Endothelial cell of umbilical vein (primary cell): ENCODE measurements at regions of chr19 and their contacts with region 1.

Region 1: GRCh38 chr19:55599468-55600279 is at the start of gene FIZ1:
- DNase-seq: peak; percentile 99
- H3K4me3 ChIP-seq: peak within 1 kb of the TSS; percentile 78 to 92 (median 89)
- H3K27ac ChIP-seq: peak within 1 kb of the TSS; percentile 98
- H3K4me1 ChIP-seq: peaks cover 12% of the 10 kb centered on the region
- H3K27me3 ChIP-seq: no peaks in the 10 kb centered on the region
- CTCF ChIP-seq: no peak
- POLR2A ChIP-seq: no peak
- total RNA-seq, gene FIZ1: 14.7 and 15.6 TPM in 2 replicates

Region 2: DNA sequence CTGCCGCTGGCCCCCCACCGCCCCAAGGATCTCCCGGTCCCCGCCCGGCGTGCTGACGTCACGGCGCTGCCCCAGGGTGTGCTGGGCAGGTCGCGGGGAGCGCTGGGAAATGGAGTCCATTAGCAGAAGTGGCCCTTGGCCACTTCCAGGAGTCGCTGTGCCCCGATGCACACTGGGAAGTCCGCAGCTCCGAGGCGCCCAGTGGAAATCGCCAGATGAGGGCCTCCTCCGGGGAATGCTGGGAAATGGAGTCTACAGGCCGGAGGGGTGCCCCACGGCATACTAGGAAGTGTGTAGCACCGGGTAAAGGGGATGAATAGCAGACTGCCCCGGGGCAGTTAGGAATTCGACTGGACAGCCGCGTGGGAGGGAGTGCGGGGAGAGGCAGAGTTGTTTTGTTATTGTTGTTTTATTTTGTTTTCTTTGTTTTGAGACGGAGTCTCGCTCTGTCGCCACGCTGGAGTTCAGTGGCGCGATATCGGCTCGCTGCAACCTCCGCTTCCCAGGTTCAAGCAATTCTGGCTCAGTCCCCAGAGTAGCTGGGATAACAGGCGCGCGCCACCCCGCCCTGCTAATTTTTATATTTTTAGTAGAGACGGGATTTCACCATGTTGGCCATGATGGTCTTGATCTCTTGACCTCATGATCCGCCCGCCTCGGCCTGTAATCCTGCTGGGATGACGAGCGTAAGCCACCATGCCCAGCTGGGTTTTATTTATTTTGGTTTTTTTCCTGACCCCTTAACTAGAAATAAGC is 481.9 kb before region 1 on chr19 and contains the start of gene PPP1R12C:
- CTCF ChIA-PET with region 1: no interaction called
- POLR2A ChIA-PET with region 1: no interaction called
- dilution Hi-C with region 1: no loop called
- intact Hi-C with region 1: loop called (anchors 1 kb)
- DNase-seq: peak; percentile 98
- H3K4me3 ChIP-seq: peak within 1 kb of the TSS; percentile 30 to 92 (median 75)
- H3K27ac ChIP-seq: peak within 1 kb of the TSS; percentile 59
- H3K4me1 ChIP-seq: peaks cover 20% of the 10 kb centered on the region
- H3K27me3 ChIP-seq: no peaks in the 10 kb centered on the region
- CTCF ChIP-seq: no peak
- POLR2A ChIP-seq: peak; percentile 79
- total RNA-seq, gene PPP1R12C: 137 and 149 TPM in 2 replicates

Region 3: GRCh38 chr19:55385740-55386529 is 213.7 kb before region 1 on chr19 and contains the start of gene RPL28:
- CTCF ChIA-PET with region 1: no interaction called
- POLR2A ChIA-PET with region 1: no interaction called
- dilution Hi-C with region 1: no loop called
- intact Hi-C with region 1: loop called (anchors 10 kb)
- DNase-seq: peak; percentile 99
- H3K4me3 ChIP-seq: peak within 1 kb of the TSS; percentile 33 to 69 (median 67)
- H3K27ac ChIP-seq: peak within 1 kb of the TSS; percentile 75
- H3K4me1 ChIP-seq: peaks cover 31% of the 10 kb centered on the region
- H3K27me3 ChIP-seq: no peaks in the 10 kb centered on the region
- CTCF ChIP-seq: no peak
- POLR2A ChIP-seq: peak; percentile 100
- total RNA-seq, gene RPL28: 1,738 and 1,872 TPM in 2 replicates

Region 4: GRCh38 chr19:55549500-55550320 is 50.0 kb before region 1 on chr19:
- CTCF ChIA-PET with region 1: interaction called, 4 read pairs
- POLR2A ChIA-PET with region 1: no interaction called
- dilution Hi-C with region 1: no loop called
- intact Hi-C with region 1: loop called (anchors 1 kb)
- DNase-seq: peak; percentile 86
- H3K4me3 ChIP-seq: peak overlapping the region in 2 of 3 experiments; percentile 21 to 26
- H3K27ac ChIP-seq: peak overlapping the region; percentile 96
- H3K4me1 ChIP-seq: peaks cover 33% of the 10 kb centered on the region
- H3K27me3 ChIP-seq: peaks cover 0 to 3% of the 10 kb centered on the region in 2 experiments
- CTCF ChIP-seq: peak in 1 of 2 donors; percentile 13
- POLR2A ChIP-seq: no peak

Region 5: DNA sequence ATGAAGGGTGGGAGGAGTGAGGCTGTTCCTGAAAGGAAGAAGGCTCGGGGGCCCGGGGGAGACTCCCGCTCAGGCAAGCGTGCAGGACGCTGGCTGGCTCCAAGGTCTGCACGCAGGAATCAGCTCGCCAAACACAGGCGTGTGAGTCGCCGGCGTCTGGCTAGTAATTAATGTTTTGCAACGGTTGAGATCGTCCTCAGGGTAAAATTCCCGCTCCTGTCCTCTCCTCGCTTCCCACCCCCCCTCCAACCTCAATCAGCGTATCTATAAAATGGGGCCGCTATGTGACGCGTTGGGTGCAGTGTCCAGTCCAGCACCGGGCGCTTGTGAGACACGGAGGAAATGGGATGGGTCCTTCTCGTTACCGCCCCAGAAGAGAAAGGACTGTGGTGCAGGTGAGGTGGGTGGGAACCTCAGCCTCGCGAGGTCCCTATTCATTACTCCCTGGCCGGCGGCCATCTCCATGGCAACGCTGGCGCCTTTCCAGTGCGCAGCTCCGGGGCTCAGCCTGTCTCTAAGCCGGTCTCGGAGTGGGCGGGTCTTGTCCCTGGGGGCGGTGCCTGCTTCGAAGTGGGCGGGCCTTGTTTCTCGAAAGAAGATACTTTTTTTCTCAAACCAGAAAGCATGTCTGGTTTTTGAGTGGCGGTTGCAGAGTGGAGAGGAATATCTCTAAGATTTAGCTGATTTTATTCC is 12.6 kb before region 1 on chr19:
- CTCF ChIA-PET with region 1: interaction called, 3 read pairs
- POLR2A ChIA-PET with region 1: interaction called, 8 read pairs
- dilution Hi-C with region 1: no loop called
- intact Hi-C with region 1: loop called (anchors 1 kb)
- DNase-seq: peak; percentile 92
- H3K4me3 ChIP-seq: peak overlapping the region in 1 of 3 experiments; percentile 3
- H3K27ac ChIP-seq: no peak overlapping the region
- H3K4me1 ChIP-seq: no peaks in the 10 kb centered on the region
- H3K27me3 ChIP-seq: peaks cover 4 to 7% of the 10 kb centered on the region in 2 experiments
- CTCF ChIP-seq: no peak
- POLR2A ChIP-seq: no peak

Region 6: DNA sequence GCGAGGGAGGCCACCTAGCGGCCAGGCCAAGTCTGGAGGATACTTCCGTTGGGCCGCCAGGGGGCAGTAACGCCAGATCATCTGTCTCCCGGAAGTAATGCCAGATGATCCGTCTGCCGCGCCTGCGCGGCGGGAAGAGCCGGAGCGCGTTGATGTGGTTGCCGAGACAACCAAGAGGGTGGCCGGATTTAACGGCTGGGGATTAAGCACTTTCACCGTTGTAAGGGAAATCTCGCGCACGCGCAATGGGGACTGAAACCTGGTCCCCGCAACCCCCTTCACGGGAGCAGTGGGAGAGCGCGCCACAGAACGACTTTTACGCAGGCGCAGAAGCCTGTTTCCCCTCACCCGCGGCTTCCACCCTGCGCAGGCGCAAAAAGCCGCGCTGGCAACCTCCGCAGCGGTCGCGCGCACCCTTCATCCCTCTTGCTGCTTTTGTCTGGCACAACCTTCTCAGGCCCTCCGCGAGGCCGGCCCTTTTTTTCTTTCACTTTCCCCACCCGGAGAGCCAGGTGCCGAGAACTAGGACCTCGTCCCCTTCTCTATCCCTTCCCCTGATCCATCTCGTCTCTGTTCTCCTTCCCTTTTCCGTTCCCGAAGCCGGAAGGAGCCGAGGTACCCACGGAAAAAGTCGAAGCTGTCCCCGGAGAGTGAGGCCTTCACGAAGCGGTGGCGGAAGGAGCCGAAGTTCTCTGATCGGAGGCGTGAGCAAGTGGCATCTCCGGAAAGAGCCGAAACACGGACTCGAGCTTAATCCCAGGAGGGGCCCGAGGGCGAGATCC is 54.3 kb after region 1 on chr19:
- CTCF ChIA-PET with region 1: interaction called, 5 read pairs
- POLR2A ChIA-PET with region 1: interaction called, 7 read pairs
- dilution Hi-C with region 1: no loop called
- intact Hi-C with region 1: loop called (anchors 1 kb)
- DNase-seq: peak; percentile 99
- H3K4me3 ChIP-seq: peak overlapping the region; percentile 86 to 98 (median 89)
- H3K27ac ChIP-seq: peak overlapping the region; percentile 99
- H3K4me1 ChIP-seq: peaks cover 25% of the 10 kb centered on the region
- H3K27me3 ChIP-seq: no peaks in the 10 kb centered on the region
- CTCF ChIP-seq: peak; percentile 100
- POLR2A ChIP-seq: peak; percentile 79